ENCODE measurements at regions of chr13 and their contacts with region 1.

Region 1: GRCh38 chr13:26698392-26699196 is 62.0 kb downstream of the GPR12 start:
- DNase-seq: peak; percentile 85

Region 2: GRCh38 chr13:26186118-26186870 is 512.3 kb before region 1 on chr13:
- CTCF ChIA-PET with region 1: interaction called, 20 read pairs
- POLR2A ChIA-PET with region 1: interaction called, 3 read pairs
- DNase-seq: no peak

Region 3: DNA sequence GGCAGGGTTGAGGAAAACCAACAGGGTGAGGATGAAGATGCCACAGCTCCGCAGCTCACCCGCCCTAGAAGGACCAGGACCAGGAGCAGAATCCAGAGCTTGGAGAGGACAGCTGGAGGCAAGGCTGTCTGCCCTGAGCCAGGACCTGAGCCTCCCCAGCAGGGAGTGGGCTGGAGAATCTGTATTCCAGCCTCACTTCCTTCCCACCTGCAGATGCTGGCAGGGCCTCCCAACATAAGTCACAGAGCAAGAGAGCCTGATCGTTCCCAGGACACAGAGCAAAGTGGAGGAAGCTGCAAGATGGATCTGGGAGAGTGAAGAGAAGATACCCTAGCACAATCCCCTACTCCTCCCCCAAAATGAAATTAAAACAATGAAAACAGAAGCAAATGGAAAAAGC is 202.8 kb before region 1 on chr13:
- CTCF ChIA-PET with region 1: interaction called, 15 read pairs
- POLR2A ChIA-PET with region 1: no interaction called
- DNase-seq: no peak

Region 4: DNA sequence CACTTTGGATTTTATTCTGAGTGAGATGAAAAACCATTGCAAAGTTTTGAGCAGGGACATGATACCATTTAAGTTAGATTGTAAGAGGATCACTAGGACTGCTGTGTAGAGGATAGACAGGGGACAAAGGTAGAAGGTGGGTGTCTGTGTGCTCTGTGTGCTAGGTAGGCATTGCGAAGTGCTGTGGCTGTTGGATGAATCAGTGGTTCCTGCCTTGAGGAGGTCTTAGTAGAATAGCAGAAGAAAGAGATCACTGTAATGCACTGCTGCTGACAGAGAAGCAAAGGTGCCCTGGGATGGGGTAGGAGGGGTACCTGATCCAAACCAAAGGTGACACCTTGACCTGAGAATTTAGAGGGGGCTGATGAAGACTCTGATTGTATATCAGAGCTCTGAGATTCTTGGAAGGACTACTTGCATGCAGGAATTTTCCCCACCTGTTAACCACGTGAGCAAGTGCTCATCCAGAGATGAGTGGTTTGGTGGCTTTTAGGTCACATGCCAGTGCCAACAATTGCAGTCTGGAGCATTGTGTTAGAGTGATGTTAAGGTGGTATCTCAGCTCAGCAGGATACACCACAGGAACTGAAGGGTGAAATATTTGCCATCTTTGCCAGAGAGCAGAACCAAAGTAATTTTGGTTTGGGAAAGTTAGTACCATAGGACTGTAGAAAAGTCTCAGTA is 130.3 kb before region 1 on chr13:
- CTCF ChIA-PET with region 1: no interaction called
- POLR2A ChIA-PET with region 1: no interaction called
- DNase-seq: no peak

Region 5: DNA sequence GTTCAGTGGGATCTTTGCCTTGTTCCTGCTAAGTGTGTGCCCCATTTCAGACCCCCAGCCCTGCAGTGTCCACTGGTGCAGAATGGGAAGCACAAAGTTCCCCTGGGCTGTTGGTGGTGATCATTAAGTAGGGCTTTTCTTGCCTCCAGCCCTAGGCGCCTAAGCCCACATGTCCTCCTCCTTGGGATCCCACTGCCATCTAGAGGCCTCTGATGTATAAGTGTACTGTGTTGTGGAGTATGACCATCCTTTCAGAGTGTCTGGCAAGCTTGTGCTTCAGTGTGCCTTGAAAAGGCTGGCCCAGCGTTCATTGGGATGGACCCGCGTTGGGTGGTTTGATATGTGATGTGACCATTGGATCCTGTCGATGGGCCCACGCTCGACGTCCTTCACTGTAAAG is 69.9 kb before region 1 on chr13:
- CTCF ChIA-PET with region 1: no interaction called
- POLR2A ChIA-PET with region 1: no interaction called
- DNase-seq: no peak

Region 6: GRCh38 chr13:27211771-27212364 is 513.3 kb after region 1 on chr13:
- CTCF ChIA-PET with region 1: no interaction called
- POLR2A ChIA-PET with region 1: no interaction called
- DNase-seq: no peak